ENCODE measurements at regions of chr15 and their contacts with region 1.

Region 1: DNA sequence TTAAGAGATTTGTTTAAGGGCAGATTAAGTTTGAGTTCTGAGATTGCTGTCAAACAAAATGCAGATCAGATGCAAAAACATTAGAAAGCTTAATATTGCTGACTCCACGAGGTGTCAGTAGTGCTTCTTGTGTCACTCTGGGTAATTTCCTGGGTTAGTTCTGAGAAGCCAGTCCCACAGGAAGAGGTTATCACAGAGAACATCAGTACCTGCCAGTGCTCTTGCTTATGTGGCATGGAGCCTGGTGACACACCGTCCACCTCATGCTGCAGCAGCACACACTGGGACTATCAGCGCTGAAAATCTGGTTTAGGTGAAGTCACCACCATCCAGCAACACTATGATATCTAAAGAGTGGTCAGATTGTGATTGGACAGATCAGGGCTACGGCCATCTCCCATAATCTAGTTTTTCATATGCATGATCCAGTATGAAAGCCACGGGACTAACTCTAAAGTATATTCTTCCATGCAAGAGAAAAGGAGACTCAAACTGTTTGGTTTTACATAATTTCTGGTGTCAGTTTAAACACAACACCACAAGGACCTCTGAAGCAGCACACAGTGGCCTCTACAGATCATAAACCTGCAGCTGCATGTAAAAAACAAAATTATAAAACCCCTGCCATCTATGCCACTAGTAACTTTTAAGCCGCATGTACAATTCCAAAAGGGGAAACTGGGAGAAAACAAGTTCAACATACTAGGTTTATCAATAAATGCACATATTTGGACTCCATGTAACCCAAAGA is 36.1 kb upstream of the MYO5C start:
- DNase-seq: peak; percentile 58
- H3K4me3 Mint-ChIP-seq: peak overlapping the region; percentile 57
- H3K27ac Mint-ChIP-seq: peak overlapping the region; percentile 76
- H3K4me1 Mint-ChIP-seq: peaks cover 28% of the 10 kb centered on the region
- H3K27me3 Mint-ChIP-seq: no peaks in the 10 kb centered on the region

Region 2: GRCh38 chr15:52256366-52256765 is 75.3 kb before region 1 on chr15:
- intact Hi-C with region 1: loop called (anchors 1 kb)
- DNase-seq: peak; percentile 62
- H3K4me3 Mint-ChIP-seq: peak overlapping the region; percentile 47
- H3K27ac Mint-ChIP-seq: peak overlapping the region; percentile 82
- H3K4me1 Mint-ChIP-seq: peaks cover 28% of the 10 kb centered on the region
- H3K27me3 Mint-ChIP-seq: no peaks in the 10 kb centered on the region

Region 3: GRCh38 chr15:52466134-52466701 is 134.6 kb after region 1 on chr15:
- intact Hi-C with region 1: loop called (anchors 1 kb)
- DNase-seq: peak; percentile 44
- H3K4me3 Mint-ChIP-seq: no peak overlapping the region
- H3K27ac Mint-ChIP-seq: no peak overlapping the region
- H3K4me1 Mint-ChIP-seq: peaks cover 52% of the 10 kb centered on the region
- H3K27me3 Mint-ChIP-seq: no peaks in the 10 kb centered on the region

Region 4: DNA sequence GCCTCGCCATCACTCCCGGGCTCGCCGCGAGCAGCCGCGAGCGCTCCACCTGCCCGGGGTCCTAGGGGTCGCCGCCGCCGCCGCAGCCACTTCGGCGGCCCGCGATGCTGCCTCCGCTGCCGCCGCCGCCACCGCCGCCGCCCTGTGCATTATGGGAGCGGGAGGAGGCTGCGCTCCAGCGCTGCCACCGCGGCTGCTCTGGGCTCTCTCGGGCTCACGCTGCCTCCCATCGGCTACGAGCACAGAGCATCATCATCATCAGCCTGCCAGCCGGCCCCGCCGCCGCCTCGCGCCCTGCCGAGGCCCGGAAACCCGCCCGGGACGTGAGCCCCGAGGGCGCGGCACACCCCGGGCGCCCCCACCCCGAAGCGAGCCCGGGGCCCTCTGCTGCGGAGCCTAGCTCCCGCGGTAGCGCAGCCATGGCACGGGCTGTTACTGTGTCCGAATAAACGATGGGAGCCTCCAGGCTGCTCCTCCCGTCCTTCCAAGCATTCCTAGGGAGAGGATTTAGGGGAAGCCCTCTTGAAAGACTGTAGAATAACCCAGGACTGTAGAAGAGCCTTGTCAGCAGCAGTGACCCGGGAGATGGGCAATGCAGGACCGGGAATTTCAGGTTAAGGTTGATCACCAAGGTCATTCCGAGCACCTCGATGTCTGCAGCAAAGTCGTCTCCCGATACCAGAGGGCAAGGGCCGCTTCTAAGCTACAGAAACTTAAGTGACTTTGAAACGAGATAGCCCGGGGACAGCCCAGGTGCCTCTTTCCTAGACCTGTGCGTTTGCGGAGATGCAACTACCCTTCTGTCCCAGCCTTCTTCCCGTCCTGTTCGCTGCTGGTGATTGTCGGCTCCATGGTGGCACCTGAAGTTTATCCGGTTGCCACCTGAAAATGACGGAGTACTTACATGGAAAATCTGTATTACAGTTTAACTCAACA is 197.6 kb after region 1 on chr15:
- intact Hi-C with region 1: loop called (anchors 1 kb)
- DNase-seq: peak; percentile 76
- H3K4me3 Mint-ChIP-seq: peak overlapping the region; percentile 77
- H3K27ac Mint-ChIP-seq: peak overlapping the region; percentile 75
- H3K4me1 Mint-ChIP-seq: peaks cover 29% of the 10 kb centered on the region
- H3K27me3 Mint-ChIP-seq: peaks cover 16% of the 10 kb centered on the region

Region 5: GRCh38 chr15:52735231-52736089 is 403.8 kb after region 1 on chr15:
- intact Hi-C with region 1: loop called (anchors 1 kb)
- DNase-seq: peak; percentile 68
- H3K4me3 Mint-ChIP-seq: no peak overlapping the region
- H3K27ac Mint-ChIP-seq: no peak overlapping the region
- H3K4me1 Mint-ChIP-seq: peaks cover 30% of the 10 kb centered on the region
- H3K27me3 Mint-ChIP-seq: peaks cover 8% of the 10 kb centered on the region